B cell (primary cell): ENCODE measurements at regions of chr12 and their contacts with region 1.

Region 1: GRCh38 chr12:69570545-69571399 is 14.5 kb upstream of the CCT2 start:
- DNase-seq: peak; percentile 81
- ATAC-seq: peak; percentile 63
- H3K4me3 ChIP-seq: no peak overlapping the region
- H3K4me3 Mint-ChIP-seq: no peak overlapping the region
- H3K27ac ChIP-seq: peak overlapping the region in 1 of 2 donors; percentile 82
- H3K27ac Mint-ChIP-seq: no peak overlapping the region
- H3K4me1 ChIP-seq: no peaks in the 10 kb centered on the region
- H3K4me1 Mint-ChIP-seq: peaks cover 2% of the 10 kb centered on the region
- H3K27me3 ChIP-seq: no peaks in the 10 kb centered on the region
- H3K27me3 Mint-ChIP-seq: no peaks in the 10 kb centered on the region
- CTCF ChIP-seq: peak; percentile 94

Region 2: DNA sequence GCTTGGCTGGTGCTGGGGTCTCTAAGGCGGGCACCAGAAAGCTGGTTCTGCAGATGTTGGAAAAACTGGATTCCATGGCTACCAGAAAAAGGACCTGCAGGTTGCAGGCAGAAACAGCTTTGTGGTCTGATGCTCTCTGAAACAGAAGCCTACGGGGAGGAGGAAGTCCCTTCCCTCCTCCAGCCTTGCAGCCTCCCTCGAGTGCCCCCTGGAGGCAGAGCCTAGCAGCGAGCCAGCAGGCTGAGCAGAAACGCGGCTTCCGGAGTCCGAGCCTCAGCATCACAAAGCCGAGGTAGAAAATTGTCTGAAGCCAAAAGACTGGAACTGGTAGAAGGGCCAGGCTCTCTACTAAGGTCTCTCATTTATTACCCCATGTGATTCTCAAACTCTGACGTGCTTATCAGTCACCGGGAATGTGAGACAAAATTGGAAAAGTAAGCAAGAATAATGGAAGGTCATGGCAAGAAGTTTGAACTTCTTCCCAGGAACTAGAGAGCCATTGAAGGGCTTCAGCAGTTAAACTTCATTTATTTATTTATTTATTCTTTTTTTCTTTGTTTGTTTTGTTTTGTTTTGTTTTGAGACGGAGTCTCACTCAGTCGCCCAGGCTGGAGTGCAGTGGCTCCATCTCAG is 413.6 kb before region 1 on chr12:
- CTCF ChIA-PET with region 1: interaction called, 27 read pairs
- POLR2A ChIA-PET with region 1: no interaction called
- intact Hi-C with region 1: loop called (anchors 1 kb)
- DNase-seq: peak; percentile 88
- ATAC-seq: peak; percentile 100
- H3K4me3 ChIP-seq: peak overlapping the region in 2 of 5 experiments; percentile 17 to 35
- H3K4me3 Mint-ChIP-seq: peak overlapping the region; percentile 69
- H3K27ac ChIP-seq: no peak overlapping the region
- H3K27ac Mint-ChIP-seq: peak overlapping the region; percentile 64
- H3K4me1 ChIP-seq: peaks cover 3 to 7% of the 10 kb centered on the region in 2 donors
- H3K4me1 Mint-ChIP-seq: peaks cover 12% of the 10 kb centered on the region
- H3K27me3 ChIP-seq: no peaks in the 10 kb centered on the region
- H3K27me3 Mint-ChIP-seq: no peaks in the 10 kb centered on the region
- CTCF ChIP-seq: peak; percentile 96

Region 3: GRCh38 chr12:69290545-69291277 is 280.1 kb before region 1 on chr12:
- CTCF ChIA-PET with region 1: interaction called, 49 read pairs
- POLR2A ChIA-PET with region 1: no interaction called
- intact Hi-C with region 1: loop called (anchors 1 kb)
- DNase-seq: peak; percentile 84
- ATAC-seq: peak; percentile 100
- H3K4me3 ChIP-seq: no peak overlapping the region
- H3K4me3 Mint-ChIP-seq: no peak overlapping the region
- H3K27ac ChIP-seq: no peak overlapping the region
- H3K27ac Mint-ChIP-seq: no peak overlapping the region
- H3K4me1 ChIP-seq: peaks cover 0 to 4% of the 10 kb centered on the region in 2 donors
- H3K4me1 Mint-ChIP-seq: peaks cover 4% of the 10 kb centered on the region
- H3K27me3 ChIP-seq: peaks cover 0 to 23% (median 13%) of the 10 kb centered on the region in 4 experiments
- H3K27me3 Mint-ChIP-seq: peaks cover 37% of the 10 kb centered on the region
- CTCF ChIP-seq: peak; percentile 96

Region 4: GRCh38 chr12:69388371-69388770 is 182.4 kb before region 1 on chr12:
- CTCF ChIA-PET with region 1: interaction called, 42 read pairs
- POLR2A ChIA-PET with region 1: no interaction called
- intact Hi-C with region 1: loop called (anchors 1 kb)
- DNase-seq: peak; percentile 41
- ATAC-seq: peak; percentile 28
- H3K4me3 ChIP-seq: no peak overlapping the region
- H3K4me3 Mint-ChIP-seq: no peak overlapping the region
- H3K27ac ChIP-seq: no peak overlapping the region
- H3K27ac Mint-ChIP-seq: no peak overlapping the region
- H3K4me1 ChIP-seq: no peaks in the 10 kb centered on the region
- H3K4me1 Mint-ChIP-seq: no peaks in the 10 kb centered on the region
- H3K27me3 ChIP-seq: no peaks in the 10 kb centered on the region
- H3K27me3 Mint-ChIP-seq: no peaks in the 10 kb centered on the region
- CTCF ChIP-seq: peak; percentile 57

Region 5: DNA sequence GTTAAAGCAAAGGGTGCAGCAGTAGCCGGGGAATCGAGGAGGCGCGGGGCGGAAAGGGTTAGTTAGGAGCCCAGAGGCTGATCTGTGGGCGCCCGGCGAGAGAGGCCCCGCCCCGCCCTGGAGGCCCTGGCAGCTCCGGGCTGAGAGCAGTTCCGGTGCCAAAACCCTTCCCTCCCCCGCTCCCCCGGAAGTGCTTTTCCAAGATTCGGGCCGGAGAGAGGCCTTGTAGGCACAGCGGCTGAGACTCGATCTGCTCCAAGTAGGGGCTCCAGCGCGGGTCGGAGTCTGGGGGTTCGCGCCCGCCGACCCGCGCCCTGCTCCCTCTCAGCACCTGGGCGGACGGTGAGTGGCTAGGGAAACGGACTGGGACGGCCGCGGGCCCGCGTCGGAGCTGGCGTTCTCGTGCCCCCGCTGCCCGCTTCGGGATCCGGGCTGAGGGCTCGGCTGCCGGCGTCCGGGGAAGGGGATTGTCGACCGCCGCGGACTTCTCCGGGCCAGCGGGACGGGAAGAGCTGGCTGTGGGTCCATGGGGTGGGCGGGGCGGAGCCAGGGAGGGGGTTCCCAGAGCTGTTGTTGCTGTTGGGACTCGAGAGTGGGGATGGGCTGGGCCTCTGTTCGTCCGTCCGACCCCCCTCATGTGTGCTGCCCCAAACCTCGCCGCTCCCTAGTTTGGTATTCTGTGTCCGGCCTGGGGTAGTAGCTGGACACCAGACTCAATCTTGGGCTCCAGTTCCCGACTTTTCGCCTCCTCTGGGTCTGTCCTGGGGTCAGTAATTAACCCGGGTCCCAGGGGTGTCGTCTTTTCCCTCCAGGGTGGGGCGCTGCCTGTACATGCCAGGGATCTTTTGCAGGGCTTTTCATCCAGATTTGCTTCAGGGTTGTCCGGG is 100.3 kb before region 1 on chr12 and contains the start of gene FRS2:
- CTCF ChIA-PET with region 1: interaction called, 11 read pairs
- POLR2A ChIA-PET with region 1: no interaction called
- intact Hi-C with region 1: no loop called
- DNase-seq: peak; percentile 84
- ATAC-seq: peak; percentile 94
- H3K4me3 ChIP-seq: peak within 1 kb of the TSS; percentile 48 to 99 (median 96)
- H3K4me3 Mint-ChIP-seq: peak within 1 kb of the TSS; percentile 98
- H3K27ac ChIP-seq: peak within 1 kb of the TSS; percentile 78 to 94
- H3K27ac Mint-ChIP-seq: peak within 1 kb of the TSS; percentile 97
- H3K4me1 ChIP-seq: peaks cover 44 to 56% of the 10 kb centered on the region in 2 donors
- H3K4me1 Mint-ChIP-seq: peaks cover 70% of the 10 kb centered on the region
- H3K27me3 ChIP-seq: no peaks in the 10 kb centered on the region
- H3K27me3 Mint-ChIP-seq: no peaks in the 10 kb centered on the region
- CTCF ChIP-seq: no peak
- total RNA-seq, gene FRS2: 29.5 and 33.7 TPM in 2 replicates

Region 6: GRCh38 chr12:69553627-69554248 is 17.0 kb before region 1 on chr12:
- CTCF ChIA-PET with region 1: interaction called, 16 read pairs
- POLR2A ChIA-PET with region 1: no interaction called
- intact Hi-C with region 1: no loop called
- DNase-seq: no peak
- ATAC-seq: no peak
- H3K4me3 ChIP-seq: no peak overlapping the region
- H3K4me3 Mint-ChIP-seq: no peak overlapping the region
- H3K27ac ChIP-seq: no peak overlapping the region
- H3K27ac Mint-ChIP-seq: no peak overlapping the region
- H3K4me1 ChIP-seq: no peaks in the 10 kb centered on the region
- H3K4me1 Mint-ChIP-seq: peaks cover 2% of the 10 kb centered on the region
- H3K27me3 ChIP-seq: no peaks in the 10 kb centered on the region
- H3K27me3 Mint-ChIP-seq: no peaks in the 10 kb centered on the region
- CTCF ChIP-seq: no peak